ENCODE measurements at regions of chr9 and their contacts with region 1.

Region 1: DNA sequence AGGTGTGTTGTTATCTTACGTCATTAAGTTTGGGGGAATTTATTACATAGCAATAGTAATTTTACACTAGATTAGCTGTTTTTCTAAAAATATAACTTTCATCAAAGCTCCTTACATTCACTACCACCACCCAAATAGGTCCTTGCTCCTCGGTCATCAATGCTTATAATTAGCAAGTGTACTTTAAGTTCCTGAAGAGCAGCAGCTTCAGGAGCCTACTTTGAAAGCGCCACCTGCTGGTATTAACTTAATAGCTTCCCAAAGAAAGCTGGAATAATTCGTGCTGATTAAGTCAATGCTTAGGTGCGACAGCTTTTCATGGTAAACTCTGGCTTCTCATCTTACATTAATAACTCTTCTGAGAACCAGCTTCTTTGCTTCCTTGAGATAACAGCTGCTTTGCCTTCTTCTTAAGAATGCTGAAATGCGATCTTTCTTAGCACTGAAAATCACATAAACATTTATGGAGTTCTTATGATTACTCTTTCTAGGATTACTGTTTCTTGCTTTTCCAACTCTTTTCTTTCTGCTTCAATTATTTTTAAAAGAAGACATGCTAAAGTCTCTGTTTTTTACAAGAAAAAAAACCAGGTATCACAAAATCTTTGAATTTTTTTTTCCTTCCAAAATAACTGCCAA is 10.0 kb upstream of the C5 start:
- DNase-seq: peak; percentile 35
- H3K4me3 Mint-ChIP-seq: no peak overlapping the region
- H3K27ac Mint-ChIP-seq: no peak overlapping the region
- H3K4me1 Mint-ChIP-seq: peaks cover 13% of the 10 kb centered on the region
- H3K27me3 Mint-ChIP-seq: no peaks in the 10 kb centered on the region

Region 2: DNA sequence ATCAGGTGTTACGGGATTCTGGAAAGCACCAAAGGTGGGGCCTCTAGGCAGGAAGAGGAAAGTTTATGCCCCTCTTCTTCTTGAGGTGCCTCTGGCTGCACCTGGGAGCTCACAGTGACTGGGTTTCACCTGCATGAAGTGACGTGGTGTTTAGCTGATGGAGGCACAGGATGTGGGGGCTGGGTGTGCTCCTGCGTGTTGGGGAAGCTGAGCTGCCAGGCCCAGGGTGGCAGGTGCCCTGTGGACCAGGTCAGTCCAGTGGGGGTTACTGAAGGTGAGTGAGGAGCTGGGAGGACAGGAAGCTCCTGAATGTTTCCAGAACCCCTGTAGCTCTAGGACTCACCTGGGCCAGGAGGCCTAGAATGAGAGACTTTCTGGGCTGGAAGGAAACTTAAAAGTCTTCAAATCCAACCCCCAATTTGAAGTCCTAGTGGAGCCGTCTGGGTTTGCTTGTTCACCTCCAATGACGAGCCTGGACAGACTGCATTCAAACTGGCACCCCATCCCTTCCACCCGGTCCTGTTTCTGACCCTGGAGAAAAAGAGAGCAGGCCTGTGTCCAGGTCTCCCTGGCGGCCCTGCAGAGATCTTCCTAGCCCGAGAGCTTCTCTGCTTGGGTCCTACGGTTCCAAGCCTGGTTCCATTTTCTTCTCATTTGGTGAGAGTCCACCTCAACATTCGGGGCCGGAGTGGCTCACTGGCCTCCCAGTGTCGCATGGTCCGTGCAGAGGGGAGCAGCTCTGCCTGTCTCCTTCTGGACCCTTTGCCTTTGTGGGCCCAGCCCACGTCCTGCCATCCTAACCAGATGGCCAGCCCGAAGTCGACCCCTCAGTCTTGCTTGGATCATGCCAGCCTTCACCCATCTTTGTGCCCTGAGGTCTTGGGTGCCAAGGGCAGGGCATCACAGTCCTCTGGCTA is 155.8 kb before region 1 on chr9:
- CTCF ChIA-PET with region 1: no interaction called
- DNase-seq: peak; percentile 77
- H3K4me3 Mint-ChIP-seq: peak overlapping the region; percentile 26
- H3K27ac Mint-ChIP-seq: peak overlapping the region; percentile 97
- H3K4me1 Mint-ChIP-seq: peaks cover 89% of the 10 kb centered on the region
- H3K27me3 Mint-ChIP-seq: no peaks in the 10 kb centered on the region

Region 3: DNA sequence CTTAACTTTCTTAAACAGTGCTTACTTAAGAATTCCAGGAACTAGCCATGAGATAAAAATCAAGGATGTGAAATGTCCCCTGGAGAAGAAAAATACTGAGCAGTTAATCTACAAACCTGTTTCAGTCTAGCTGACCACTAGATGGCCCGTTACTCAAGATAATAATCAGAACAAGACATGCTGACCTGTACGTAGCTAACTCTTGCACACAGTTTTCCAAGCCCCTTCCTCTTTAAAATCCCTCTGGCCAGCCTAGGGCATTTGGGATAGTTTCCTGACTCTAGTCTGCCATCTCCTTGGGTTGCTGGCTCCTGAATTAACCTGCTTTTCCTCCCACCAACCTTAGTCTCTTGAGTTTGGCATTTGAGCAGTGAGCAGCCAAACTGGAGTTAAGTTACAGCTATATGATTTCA is 74.3 kb before region 1 on chr9:
- CTCF ChIA-PET with region 1: interaction called, 42 read pairs
- DNase-seq: no peak
- H3K4me3 Mint-ChIP-seq: no peak overlapping the region
- H3K27ac Mint-ChIP-seq: no peak overlapping the region
- H3K4me1 Mint-ChIP-seq: no peaks in the 10 kb centered on the region
- H3K27me3 Mint-ChIP-seq: peaks cover 8% of the 10 kb centered on the region

Region 4: GRCh38 chr9:121038804-121039203 is 21.3 kb before region 1 on chr9:
- CTCF ChIA-PET with region 1: interaction called, 10 read pairs
- DNase-seq: no peak
- H3K4me3 Mint-ChIP-seq: no peak overlapping the region
- H3K27ac Mint-ChIP-seq: no peak overlapping the region
- H3K4me1 Mint-ChIP-seq: peaks cover 3% of the 10 kb centered on the region
- H3K27me3 Mint-ChIP-seq: peaks cover 1% of the 10 kb centered on the region

Region 5: DNA sequence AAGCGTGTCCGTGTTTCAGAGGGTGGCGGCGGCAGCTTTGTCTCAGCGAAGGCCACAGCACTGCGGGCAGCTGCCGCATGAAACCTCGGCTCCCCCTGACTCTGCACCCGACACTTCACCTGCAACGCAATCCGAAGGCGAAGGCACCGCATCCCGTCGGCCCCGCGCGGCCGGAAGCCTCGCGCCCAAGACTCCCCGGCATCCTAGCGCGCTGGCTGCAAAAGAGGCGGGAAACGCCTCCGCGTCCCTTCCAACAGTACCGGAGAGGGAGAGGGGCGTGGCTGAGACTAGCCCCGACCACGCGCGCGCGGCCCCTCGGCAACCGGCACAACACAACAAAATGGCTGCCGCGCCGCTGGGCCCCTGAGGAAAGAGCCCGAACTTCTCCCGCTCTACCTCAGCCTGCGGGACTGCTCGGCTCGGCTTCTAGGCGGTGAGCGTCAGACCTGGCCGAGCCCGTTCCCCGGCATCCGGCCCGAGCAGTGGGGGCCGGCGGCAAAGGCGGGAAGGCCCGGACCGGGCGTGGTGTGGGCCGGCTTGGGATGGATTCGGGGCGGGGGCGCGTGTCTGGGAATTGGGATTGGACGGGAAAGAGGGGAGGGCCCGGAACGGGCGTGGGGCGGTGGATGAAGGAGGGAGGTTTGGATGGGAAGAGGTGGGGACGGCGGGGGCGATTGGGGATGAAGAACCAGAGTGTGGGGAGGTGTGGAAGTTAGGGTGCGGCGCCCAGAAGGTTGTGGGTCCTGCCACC is 14.7 kb after region 1 on chr9 and contains the start of gene CNTRL:
- CTCF ChIA-PET with region 1: interaction called, 27 read pairs
- DNase-seq: peak; percentile 94
- H3K4me3 Mint-ChIP-seq: peak within 1 kb of the TSS; percentile 95
- H3K27ac Mint-ChIP-seq: peak within 1 kb of the TSS; percentile 90
- H3K4me1 Mint-ChIP-seq: peaks cover 64% of the 10 kb centered on the region
- H3K27me3 Mint-ChIP-seq: no peaks in the 10 kb centered on the region

Measured in activated naive CD4-positive, alpha-beta T cell treated with anti-CD3 and anti-CD28 coated beads, Interleukin-2, amount 10 ng/mL, durations not matched to agents 7 days and 5 days (primary cell).